ENCODE measurements at regions of chr10 and their contacts with region 1.

Region 1: DNA sequence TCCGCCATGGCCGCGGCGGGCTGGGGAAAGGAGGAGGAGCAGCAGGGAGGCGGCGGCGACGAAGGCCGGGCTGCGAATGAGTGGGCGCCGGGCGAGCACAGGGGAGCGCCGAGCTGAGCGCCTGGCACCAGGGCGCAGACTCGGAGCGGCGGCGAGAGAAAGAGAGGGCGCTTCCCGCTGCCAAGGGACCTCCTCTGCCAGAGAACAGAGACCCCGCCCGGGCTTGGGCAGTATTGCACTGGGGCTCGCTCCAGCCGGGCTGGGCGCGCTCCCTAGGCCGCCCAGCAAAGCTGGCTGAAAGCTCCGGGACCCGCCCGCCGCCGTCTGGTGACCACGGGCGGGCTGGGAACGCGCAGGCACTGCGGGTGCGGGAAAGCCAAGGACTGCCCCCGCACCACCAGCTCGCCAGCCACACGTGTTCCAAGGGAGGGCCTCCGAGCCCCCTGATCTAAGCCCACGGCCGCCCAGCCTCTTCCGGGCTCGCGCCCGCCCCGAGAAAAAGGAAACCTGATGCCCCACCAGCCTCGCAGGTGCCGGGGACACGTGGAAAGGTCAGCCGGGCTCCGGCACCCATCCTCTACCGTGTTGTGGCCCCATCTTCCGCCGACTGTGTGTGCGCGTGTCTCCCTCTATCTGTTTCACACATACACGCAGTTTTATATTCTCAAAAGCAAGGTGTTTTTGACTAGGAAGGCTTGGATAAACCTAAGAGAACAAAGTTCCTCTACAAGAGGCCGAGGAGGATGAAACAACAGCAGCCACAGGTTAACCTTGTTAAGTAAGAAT is at the start of gene CCDC6:
- DNase-seq: peak; percentile 96
- H3K4me3 ChIP-seq: peak within 1 kb of the TSS; percentile 68 to 81 (median 77)
- H3K27ac ChIP-seq: peak within 1 kb of the TSS; percentile 75
- H3K4me1 ChIP-seq: peaks cover 32% of the 10 kb centered on the region
- H3K27me3 ChIP-seq: no peaks in the 10 kb centered on the region
- CTCF ChIP-seq: peak; percentile 64 to 82
- POLR2A ChIP-seq: peak; percentile 75
- total RNA-seq, gene CCDC6: 36.8 TPM in 2 replicates

Region 2: GRCh38 chr10:59894114-59894513 is 12.5 kb before region 1 on chr10:
- CTCF ChIA-PET with region 1: interaction called, 10 read pairs
- POLR2A ChIA-PET with region 1: no interaction called
- dilution Hi-C with region 1: no loop called
- intact Hi-C with region 1: no loop called
- DNase-seq: no peak
- H3K4me3 ChIP-seq: no peak overlapping the region
- H3K27ac ChIP-seq: no peak overlapping the region
- H3K4me1 ChIP-seq: no peaks in the 10 kb centered on the region
- H3K27me3 ChIP-seq: no peaks in the 10 kb centered on the region
- CTCF ChIP-seq: no peak
- POLR2A ChIP-seq: no peak

Measured in endothelial cell of umbilical vein (primary cell).